ENCODE measurements at regions of chr2 and their contacts with region 1.

Region 1: GRCh38 chr2:33497221-33497650 is 20.8 kb downstream of the RASGRP3 start:
- DNase-seq: no peak
- ATAC-seq: peak; percentile 71
- H3K4me3 ChIP-seq: no peak overlapping the region
- H3K4me3 Mint-ChIP-seq: peak overlapping the region in 2 of 10 donors; percentile 2 to 58
- H3K27ac ChIP-seq: no peak overlapping the region
- H3K27ac Mint-ChIP-seq: peak overlapping the region in 1 of 9 donors; percentile 47
- H3K4me1 ChIP-seq: peaks cover 0 to 26% of the 10 kb centered on the region in 2 donors
- H3K4me1 Mint-ChIP-seq: peaks cover 0 to 43% (median 18%) of the 10 kb centered on the region in 7 donors
- H3K27me3 ChIP-seq: no peaks in the 10 kb centered on the region
- H3K27me3 Mint-ChIP-seq: peaks cover 0 to 5% (median 0%) of the 10 kb centered on the region in 5 donors

Region 2: GRCh38 chr2:33510586-33510968 is 13.3 kb after region 1 on chr2:
- CTCF ChIA-PET with region 1: no interaction called
- POLR2A ChIA-PET with region 1: no interaction called
- intact Hi-C with region 1: loop called in 1 of 2 experiments (anchors 2 kb)
- DNase-seq: no peak
- ATAC-seq: no peak
- H3K4me3 ChIP-seq: no peak overlapping the region
- H3K4me3 Mint-ChIP-seq: no peak overlapping the region
- H3K27ac ChIP-seq: no peak overlapping the region
- H3K27ac Mint-ChIP-seq: no peak overlapping the region
- H3K4me1 ChIP-seq: no peaks in the 10 kb centered on the region
- H3K4me1 Mint-ChIP-seq: no peaks in the 10 kb centered on the region
- H3K27me3 ChIP-seq: no peaks in the 10 kb centered on the region
- H3K27me3 Mint-ChIP-seq: no peaks in the 10 kb centered on the region

Region 3: GRCh38 chr2:33526132-33526531 is 28.9 kb after region 1 on chr2:
- CTCF ChIA-PET with region 1: no interaction called
- POLR2A ChIA-PET with region 1: no interaction called
- intact Hi-C with region 1: loop called in 1 of 2 experiments (anchors 1 kb)
- DNase-seq: no peak
- ATAC-seq: no peak
- H3K4me3 ChIP-seq: no peak overlapping the region
- H3K4me3 Mint-ChIP-seq: no peak overlapping the region
- H3K27ac ChIP-seq: no peak overlapping the region
- H3K27ac Mint-ChIP-seq: peak overlapping the region in 1 of 9 donors; percentile 30
- H3K4me1 ChIP-seq: no peaks in the 10 kb centered on the region
- H3K4me1 Mint-ChIP-seq: peaks cover 0 to 20% (median 0%) of the 10 kb centered on the region in 7 donors
- H3K27me3 ChIP-seq: no peaks in the 10 kb centered on the region
- H3K27me3 Mint-ChIP-seq: no peaks in the 10 kb centered on the region

Region 4: DNA sequence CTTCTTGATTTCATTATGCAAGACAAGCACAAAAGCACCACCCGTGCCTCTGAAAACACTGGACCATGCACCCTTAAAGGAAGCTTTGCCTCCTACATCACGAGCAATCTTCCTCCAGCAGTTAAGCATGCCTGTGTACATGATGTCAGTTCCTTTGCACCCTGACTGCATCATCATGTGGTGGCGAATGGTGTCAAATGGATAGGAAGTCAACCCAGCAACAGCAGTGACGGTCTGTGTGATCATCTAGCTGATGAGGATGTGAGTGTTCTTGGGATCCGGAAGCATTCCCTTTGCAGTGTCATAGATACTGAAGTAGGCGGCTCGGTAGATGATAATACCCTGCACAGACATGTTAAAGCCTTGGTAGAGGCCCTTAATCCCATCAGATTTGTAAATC is 342.6 kb after region 1 on chr2:
- CTCF ChIA-PET with region 1: no interaction called
- POLR2A ChIA-PET with region 1: no interaction called
- intact Hi-C with region 1: no loop called
- DNase-seq: no peak
- ATAC-seq: no peak
- H3K4me3 ChIP-seq: no peak overlapping the region
- H3K4me3 Mint-ChIP-seq: no peak overlapping the region
- H3K27ac ChIP-seq: no peak overlapping the region
- H3K27ac Mint-ChIP-seq: no peak overlapping the region
- H3K4me1 ChIP-seq: no peaks in the 10 kb centered on the region
- H3K4me1 Mint-ChIP-seq: no peaks in the 10 kb centered on the region
- H3K27me3 ChIP-seq: no peaks in the 10 kb centered on the region
- H3K27me3 Mint-ChIP-seq: no peaks in the 10 kb centered on the region

Measured in naive thymus-derived CD4-positive, alpha-beta T cell (primary cell).